PC-3 (cell line): ENCODE measurements at regions of chr17 and their contacts with region 1.

Region 1: DNA sequence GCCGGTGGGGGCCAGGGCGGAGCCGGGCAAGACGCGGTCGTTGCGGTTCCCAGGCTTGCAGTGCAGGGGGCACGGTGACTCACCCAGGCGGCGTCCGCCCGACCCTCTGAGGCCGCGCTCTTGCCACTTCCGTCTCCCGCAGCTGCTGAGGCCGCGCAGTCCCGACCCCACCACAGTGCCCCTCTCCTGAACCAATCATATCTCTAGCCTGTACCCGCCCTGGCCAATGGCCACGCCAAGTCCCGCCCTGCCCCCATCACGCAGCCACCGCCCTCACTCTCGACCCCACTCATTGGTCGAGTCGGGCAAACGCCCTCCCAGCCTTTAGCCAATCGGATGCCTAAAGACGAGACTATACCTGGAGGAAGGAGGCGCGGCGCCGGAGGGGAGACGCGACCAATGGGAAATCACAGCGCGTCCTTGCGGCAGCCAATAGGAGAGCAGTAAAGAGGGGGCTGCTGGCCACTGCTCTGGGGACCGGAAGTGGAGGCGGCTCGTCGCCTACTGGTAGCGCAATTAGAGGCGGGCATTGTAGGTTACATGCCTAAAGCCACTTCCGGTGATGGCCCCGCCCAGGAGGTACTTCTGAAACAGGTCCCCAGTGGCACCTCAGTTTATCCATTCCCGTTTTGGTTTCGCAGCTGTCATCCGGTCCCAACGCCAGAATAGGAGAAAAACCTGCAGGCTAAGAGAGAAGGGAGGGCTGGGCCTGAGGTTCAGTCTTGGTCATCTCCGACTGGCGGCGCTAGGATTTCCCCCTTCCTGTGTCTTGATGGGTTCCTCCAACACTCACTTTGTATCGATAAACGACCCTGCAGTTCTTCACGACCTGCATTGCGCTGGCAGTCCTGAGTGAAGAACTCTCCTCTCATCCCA is 3.5 kb upstream of the MTMR4 start:
- DNase-seq: peak; percentile 100
- ATAC-seq: peak; percentile 73
- H3K4me3 ChIP-seq: peak overlapping the region; percentile 83
- H3K27ac ChIP-seq: peak overlapping the region; percentile 63
- H3K4me1 ChIP-seq: peaks cover 24% of the 10 kb centered on the region
- H3K27me3 ChIP-seq: no peaks in the 10 kb centered on the region
- CTCF ChIP-seq: no peak

Region 2: DNA sequence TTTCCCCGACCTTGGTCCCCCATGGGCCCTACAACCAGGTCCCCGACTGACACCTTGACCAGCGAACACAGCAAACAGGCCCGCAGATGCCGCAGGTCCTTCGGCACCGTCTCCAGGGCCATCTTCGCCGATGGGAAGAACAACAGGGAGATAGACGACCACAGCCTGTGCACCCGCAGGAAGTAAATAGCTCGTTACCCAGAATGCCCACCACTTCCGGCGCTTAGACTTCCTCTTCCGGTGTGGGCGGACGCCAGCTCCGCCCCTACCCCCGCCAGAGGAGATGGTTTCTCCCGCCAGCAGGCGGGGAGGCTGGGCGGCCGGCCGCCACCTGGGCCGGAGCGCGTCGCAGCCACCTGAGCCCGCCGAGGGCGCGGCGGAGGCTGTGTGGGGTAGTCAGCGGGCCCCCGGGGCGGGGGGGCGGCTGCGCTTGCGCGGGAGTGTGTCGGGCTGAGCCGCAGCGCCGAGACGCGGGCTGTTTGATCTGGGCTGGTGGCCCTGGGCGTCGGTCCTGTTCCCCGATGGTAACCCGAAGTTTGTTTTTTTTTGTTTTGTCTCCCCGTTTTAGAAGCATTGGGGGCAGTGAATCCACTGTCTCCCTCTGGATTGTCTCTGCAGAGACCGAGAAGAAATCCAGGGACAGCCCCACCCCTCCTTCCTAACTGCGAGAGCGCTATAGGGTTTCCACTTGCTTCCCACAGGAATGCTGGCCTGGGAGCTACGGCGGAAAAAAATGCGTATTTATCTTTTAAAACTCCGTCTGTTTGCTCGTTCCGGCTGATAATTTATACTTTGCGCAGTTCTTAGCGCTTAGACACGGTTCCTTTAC is 165.7 kb before region 1 on chr17 and contains the start of gene SUPT4H1:
- CTCF ChIA-PET with region 1: interaction called, 8 read pairs
- POLR2A ChIA-PET with region 1: no interaction called
- intact Hi-C with region 1: loop called (anchors 10 kb)
- DNase-seq: peak; percentile 99
- ATAC-seq: peak; percentile 95
- H3K4me3 ChIP-seq: peak within 1 kb of the TSS; percentile 97
- H3K27ac ChIP-seq: peak within 1 kb of the TSS; percentile 63
- H3K4me1 ChIP-seq: peaks cover 15% of the 10 kb centered on the region
- H3K27me3 ChIP-seq: no peaks in the 10 kb centered on the region
- CTCF ChIP-seq: no peak
- total RNA-seq, gene SUPT4H1: 100.0 and 116 TPM in 2 replicates

Region 3: DNA sequence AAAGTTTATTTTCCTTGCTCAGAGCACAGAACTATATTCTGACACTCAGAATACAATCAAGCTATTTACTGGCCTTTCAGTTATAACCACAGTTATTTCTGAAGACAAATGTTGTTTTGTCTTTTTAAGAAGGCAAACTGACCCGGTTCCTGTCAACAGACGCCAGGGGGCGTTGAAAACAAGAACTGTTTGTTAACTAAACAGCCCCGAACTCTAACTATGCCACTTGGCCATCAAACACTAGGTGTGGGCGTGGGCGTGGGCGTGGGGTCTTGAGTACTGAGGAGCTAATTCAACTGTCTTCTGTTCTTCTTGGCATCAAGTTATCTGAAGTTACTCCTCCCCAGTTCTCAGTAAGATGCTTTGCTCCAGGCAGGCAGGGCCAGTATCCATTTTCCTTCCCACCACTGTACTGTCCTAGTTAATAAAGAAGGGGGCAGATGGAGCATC is 59.7 kb after region 1 on chr17:
- CTCF ChIA-PET with region 1: interaction called, 3 read pairs
- POLR2A ChIA-PET with region 1: no interaction called
- intact Hi-C with region 1: loop called (anchors 1 kb)
- DNase-seq: peak; percentile 80
- ATAC-seq: peak; percentile 65
- H3K4me3 ChIP-seq: no peak overlapping the region
- H3K27ac ChIP-seq: no peak overlapping the region
- H3K4me1 ChIP-seq: peaks cover 9% of the 10 kb centered on the region
- H3K27me3 ChIP-seq: no peaks in the 10 kb centered on the region
- CTCF ChIP-seq: peak; percentile 94

Region 4: DNA sequence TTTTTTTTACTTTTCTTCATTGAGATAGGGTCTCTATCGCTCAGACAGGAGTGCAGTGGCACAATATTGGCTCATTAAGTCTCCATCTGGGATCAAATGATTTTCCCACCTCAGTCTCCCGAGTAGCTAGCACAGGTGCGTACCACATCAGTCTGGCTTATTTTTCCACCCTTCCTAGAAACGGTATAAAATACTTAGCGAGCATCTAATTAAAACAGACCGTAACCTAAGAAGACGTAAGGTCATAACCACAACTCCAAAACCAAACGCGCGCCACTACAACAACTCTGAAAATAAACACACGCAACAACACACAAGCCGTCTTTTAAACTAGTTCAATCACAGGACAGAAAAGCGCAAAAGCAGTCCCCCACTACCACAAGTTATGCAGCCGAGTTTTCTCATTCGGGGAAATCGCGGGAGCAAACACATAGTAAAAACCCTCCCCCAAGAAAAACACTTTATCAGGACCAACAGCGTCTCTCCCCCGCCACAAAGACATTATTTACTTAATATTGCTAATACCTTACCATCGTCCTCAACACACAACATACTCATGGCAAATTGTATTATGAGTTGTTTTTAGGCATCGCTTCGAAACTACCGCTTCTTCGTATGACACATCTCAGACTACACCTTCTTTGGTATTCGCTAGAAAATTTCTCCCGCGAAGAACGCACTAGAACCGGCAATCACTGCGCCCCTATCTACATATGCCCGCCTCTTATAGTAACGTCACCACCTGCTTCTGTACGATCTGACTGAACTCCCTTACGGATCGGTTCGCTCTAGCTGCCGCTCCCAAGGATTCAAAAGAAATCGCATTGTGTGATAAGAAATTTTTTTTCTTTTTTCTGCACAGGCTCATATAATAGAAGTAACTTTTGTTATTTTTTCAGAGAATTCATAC is 141.1 kb after region 1 on chr17:
- CTCF ChIA-PET with region 1: no interaction called
- POLR2A ChIA-PET with region 1: no interaction called
- intact Hi-C with region 1: loop called (anchors 1 kb)
- DNase-seq: peak; percentile 98
- ATAC-seq: peak; percentile 91
- H3K4me3 ChIP-seq: peak overlapping the region; percentile 56
- H3K27ac ChIP-seq: peak overlapping the region; percentile 89
- H3K4me1 ChIP-seq: 0 out of 2 replicates have a peak, but pooled peaks cover 8% of the 10 kb centered on the region
- H3K27me3 ChIP-seq: no peaks in the 10 kb centered on the region
- CTCF ChIP-seq: no peak

Region 5: GRCh38 chr17:58997756-58998550 is 480.0 kb after region 1 on chr17:
- CTCF ChIA-PET with region 1: no interaction called
- POLR2A ChIA-PET with region 1: no interaction called
- intact Hi-C with region 1: loop called (anchors 1 kb)
- DNase-seq: peak; percentile 47
- ATAC-seq: peak; percentile 77
- H3K4me3 ChIP-seq: no peak overlapping the region
- H3K27ac ChIP-seq: peak overlapping the region; percentile 15; the same call in 1 of the 2 replicates
- H3K4me1 ChIP-seq: peaks cover 22% of the 10 kb centered on the region
- H3K27me3 ChIP-seq: no peaks in the 10 kb centered on the region
- CTCF ChIP-seq: no peak

Region 6: GRCh38 chr17:59155439-59156182 is 637.6 kb after region 1 on chr17 and contains the start of gene PRR11:
- CTCF ChIA-PET with region 1: no interaction called
- POLR2A ChIA-PET with region 1: no interaction called
- intact Hi-C with region 1: loop called (anchors 1 kb)
- DNase-seq: no peak
- ATAC-seq: peak; percentile 81
- H3K4me3 ChIP-seq: peak within 1 kb of the TSS; percentile 79
- H3K27ac ChIP-seq: peak within 1 kb of the TSS; percentile 79
- H3K4me1 ChIP-seq: peaks cover 57% of the 10 kb centered on the region
- H3K27me3 ChIP-seq: no peaks in the 10 kb centered on the region
- CTCF ChIP-seq: no peak
- total RNA-seq, gene PRR11: 77.2 and 78.9 TPM in 2 replicates